Transverse colon (tissue), 4 donors: ENCODE measurements at regions of chr6 and their contacts with region 1.

Region 1: GRCh38 chr6:101445527-101445926 is 52.0 kb downstream of the GRIK2 start:
- DNase-seq: no peak
- H3K4me3 ChIP-seq: no peak overlapping the region
- H3K27ac ChIP-seq: no peak overlapping the region
- H3K4me1 ChIP-seq: no peaks in the 10 kb centered on the region
- H3K27me3 ChIP-seq: no peaks in the 10 kb centered on the region
- CTCF ChIP-seq: no peak
- EP300 ChIP-seq: no peak
- POLR2A ChIP-seq: no peak

Region 2: DNA sequence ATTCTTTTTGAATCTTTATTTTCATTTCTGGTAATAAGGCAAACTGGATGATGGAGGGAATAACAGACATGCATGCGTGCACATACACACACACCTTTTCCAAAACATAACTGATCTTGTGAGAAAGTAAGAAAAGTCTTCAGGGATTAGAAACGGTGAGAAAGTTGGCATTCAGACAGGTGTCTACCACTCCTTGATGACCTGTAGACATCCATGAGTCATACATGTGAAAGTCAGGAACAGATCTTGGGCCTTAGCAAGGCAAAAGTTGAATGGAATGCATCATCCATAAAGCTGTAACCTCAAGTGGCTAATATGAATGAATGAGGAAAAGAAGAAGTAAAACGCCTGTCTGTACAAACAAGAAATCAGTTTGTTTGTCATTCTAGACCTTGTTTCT is 45.3 kb after region 1 on chr6:
- in situ Hi-C with region 1: no loop called
- intact Hi-C with region 1: loop called (anchors 2 kb)
- DNase-seq: no peak
- H3K4me3 ChIP-seq: no peak overlapping the region
- H3K27ac ChIP-seq: no peak overlapping the region
- H3K4me1 ChIP-seq: no peaks in the 10 kb centered on the region
- H3K27me3 ChIP-seq: no peaks in the 10 kb centered on the region
- CTCF ChIP-seq: no peak
- EP300 ChIP-seq: no peak
- POLR2A ChIP-seq: no peak

Region 3: GRCh38 chr6:101597693-101598092 is 152.2 kb after region 1 on chr6:
- in situ Hi-C with region 1: no loop called
- intact Hi-C with region 1: no loop called
- DNase-seq: no peak
- H3K4me3 ChIP-seq: no peak overlapping the region
- H3K27ac ChIP-seq: no peak overlapping the region
- H3K4me1 ChIP-seq: no peaks in the 10 kb centered on the region
- H3K27me3 ChIP-seq: no peaks in the 10 kb centered on the region
- CTCF ChIP-seq: no peak
- EP300 ChIP-seq: no peak
- POLR2A ChIP-seq: no peak